ENCODE measurements at regions of chr13 and their contacts with region 1.

Region 1: DNA sequence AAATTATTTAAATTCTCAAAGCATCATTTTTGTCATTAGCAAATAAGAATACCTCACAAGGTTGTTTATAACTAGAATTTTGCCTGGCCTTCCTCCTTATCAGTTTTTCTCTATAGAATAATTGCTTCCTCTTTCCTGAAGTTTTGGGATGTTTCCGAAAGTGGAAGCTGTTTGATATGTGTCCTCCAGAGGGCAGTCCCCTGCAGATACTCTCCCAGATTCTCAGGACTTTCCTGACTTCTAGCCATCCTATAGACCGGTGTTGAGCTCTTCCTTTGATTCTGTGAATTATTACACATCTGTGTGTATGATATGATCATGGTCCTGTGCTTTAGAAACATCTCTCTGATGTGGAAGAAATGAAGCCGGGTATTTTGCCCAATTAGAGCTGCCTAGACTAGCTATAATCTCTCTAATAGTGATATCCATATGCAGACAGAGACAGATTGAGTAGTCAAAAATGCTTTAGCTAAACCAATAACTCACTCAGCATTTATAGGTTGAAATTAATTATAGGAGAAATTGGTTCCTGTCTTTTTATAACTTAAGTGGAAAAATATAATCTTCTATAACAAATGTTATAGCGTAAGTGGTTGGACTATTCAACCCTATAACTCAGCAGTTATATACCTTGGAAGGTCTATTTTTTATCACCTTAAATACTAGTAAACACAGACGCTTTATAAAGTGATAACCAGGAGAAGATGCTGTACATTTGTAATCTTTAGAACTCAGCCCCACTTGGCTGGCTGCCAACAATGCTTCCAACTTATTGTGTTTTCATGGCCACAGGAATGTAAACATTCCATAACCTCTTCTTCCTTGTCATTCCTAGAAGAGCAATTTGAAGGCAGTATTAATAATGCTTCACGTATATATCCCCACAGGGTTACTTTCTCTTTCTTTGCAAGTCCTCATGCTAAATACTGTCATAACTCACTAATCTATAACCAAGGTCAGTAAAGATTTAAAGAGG is 201.0 kb upstream of the RXFP2 start:
- DNase-seq: peak in 1 of 2 donors; percentile 23
- H3K4me3 ChIP-seq: no peak overlapping the region
- H3K27ac ChIP-seq: no peak overlapping the region
- H3K4me1 ChIP-seq: no peaks in the 10 kb centered on the region
- H3K27me3 ChIP-seq: no peaks in the 10 kb centered on the region
- CTCF ChIP-seq: peak; percentile 54 to 65

Region 2: GRCh38 chr13:31352467-31352866 is 185.9 kb before region 1 on chr13:
- intact Hi-C with region 1: no loop called
- DNase-seq: no peak
- H3K4me3 ChIP-seq: no peak overlapping the region
- H3K27ac ChIP-seq: no peak overlapping the region
- H3K4me1 ChIP-seq: no peaks in the 10 kb centered on the region
- H3K27me3 ChIP-seq: peaks cover 0 to 3% of the 10 kb centered on the region in 2 donors
- CTCF ChIP-seq: no peak

Region 3: DNA sequence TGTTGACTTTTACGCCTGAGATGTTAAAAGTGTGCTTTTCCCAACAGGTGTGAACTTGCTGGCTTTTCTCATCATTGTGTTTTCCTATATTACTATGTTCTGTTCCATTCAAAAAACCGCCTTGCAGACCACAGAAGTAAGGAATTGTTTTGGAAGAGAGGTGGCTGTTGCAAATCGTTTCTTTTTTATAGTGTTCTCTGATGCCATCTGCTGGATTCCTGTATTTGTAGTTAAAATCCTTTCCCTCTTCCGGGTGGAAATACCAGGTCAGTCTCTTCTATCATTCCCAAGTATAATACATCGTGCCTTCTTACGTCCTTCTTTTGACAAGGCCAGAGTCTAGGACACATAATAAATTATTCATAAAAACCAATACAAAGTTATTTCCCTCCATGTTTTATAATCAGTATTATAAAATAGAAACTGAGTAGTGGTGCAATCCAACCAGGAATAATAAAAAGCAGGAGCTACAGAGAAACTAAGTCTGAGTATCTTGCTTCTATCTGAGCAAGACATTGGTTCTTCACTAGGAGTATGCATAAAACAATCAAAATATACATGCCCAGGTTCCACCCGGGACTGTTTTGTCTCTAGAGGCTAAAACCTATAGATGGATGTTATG is 258.9 kb after region 1 on chr13:
- intact Hi-C with region 1: loop called (anchors 5 kb)
- DNase-seq: no peak
- H3K4me3 ChIP-seq: no peak overlapping the region
- H3K27ac ChIP-seq: no peak overlapping the region
- H3K4me1 ChIP-seq: peaks cover 0 to 5% (median 2%) of the 10 kb centered on the region in 4 donors
- H3K27me3 ChIP-seq: no peaks in the 10 kb centered on the region
- CTCF ChIP-seq: peak; percentile 50 to 72

Measured in tibial artery (tissue), 4 donors.